ENCODE measurements at regions of chr12 and their contacts with region 1.

Region 1: GRCh38 chr12:47302111-47302671 is 222.4 kb upstream of the AMIGO2 start:
- DNase-seq: no peak
- H3K4me3 Mint-ChIP-seq: no peak overlapping the region
- H3K27ac Mint-ChIP-seq: peak overlapping the region; percentile 91
- H3K4me1 Mint-ChIP-seq: peaks cover 47% of the 10 kb centered on the region
- H3K27me3 Mint-ChIP-seq: no peaks in the 10 kb centered on the region

Region 2: DNA sequence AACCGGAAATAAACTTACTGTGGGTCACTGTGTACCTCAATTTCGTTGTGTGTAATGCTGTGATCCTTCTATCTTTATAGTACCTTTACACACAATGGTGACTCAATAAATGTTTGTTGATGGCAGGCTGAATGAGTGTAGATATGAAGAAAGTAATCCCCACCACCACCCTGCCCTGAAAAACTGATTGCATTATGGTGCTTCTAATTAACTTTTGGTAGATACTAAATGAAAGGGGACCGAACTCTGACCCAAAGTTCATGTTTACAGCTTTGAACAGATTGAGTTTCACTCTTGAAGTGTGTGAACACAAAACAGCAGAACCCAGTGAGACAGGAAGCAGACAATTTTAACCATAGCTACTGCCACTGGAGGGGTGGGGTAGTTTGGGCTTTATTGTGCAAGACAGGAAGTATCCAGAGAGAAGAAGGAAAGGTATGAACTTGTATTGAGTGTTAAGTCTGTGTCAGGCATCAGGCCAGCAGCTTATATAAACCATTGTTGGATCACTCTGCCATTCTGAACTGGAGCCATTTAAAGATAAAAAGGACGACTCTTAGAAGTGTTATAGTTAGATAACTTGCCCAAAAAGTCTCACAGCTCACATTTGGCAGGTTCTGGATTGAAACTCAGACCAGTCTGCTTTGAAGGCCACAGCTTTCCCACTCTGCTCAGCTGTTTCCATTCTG is 25.4 kb before region 1 on chr12:
- intact Hi-C with region 1: loop called (anchors 1 kb)
- DNase-seq: peak; percentile 65
- H3K4me3 Mint-ChIP-seq: peak overlapping the region; percentile 48
- H3K27ac Mint-ChIP-seq: peak overlapping the region; percentile 81
- H3K4me1 Mint-ChIP-seq: peaks cover 74% of the 10 kb centered on the region
- H3K27me3 Mint-ChIP-seq: no peaks in the 10 kb centered on the region